Caco-2 (cell line): ENCODE measurements at regions of chr10 and their contacts with region 1.

Region 1: GRCh38 chr10:61964059-61964709 is 62.7 kb downstream of the ARID5B start:
- DNase-seq: peak; percentile 53 to 57
- H3K4me3 ChIP-seq: no peak overlapping the region
- H3K4me3 Mint-ChIP-seq: peak overlapping the region; percentile 51
- H3K27ac Mint-ChIP-seq: peak overlapping the region; percentile 84
- H3K4me1 ChIP-seq: peaks cover 78% of the 10 kb centered on the region
- H3K4me1 Mint-ChIP-seq: peaks cover 75% of the 10 kb centered on the region
- H3K27me3 ChIP-seq: no peaks in the 10 kb centered on the region
- H3K27me3 Mint-ChIP-seq: no peaks in the 10 kb centered on the region
- CTCF ChIP-seq: no peak

Region 2: GRCh38 chr10:61918140-61918539 is 46.0 kb before region 1 on chr10:
- CTCF ChIA-PET with region 1: no interaction called
- POLR2A ChIA-PET with region 1: no interaction called
- intact Hi-C with region 1: no loop called
- DNase-seq: no peak
- H3K4me3 ChIP-seq: no peak overlapping the region
- H3K4me3 Mint-ChIP-seq: peak overlapping the region; percentile 7
- H3K27ac Mint-ChIP-seq: peak overlapping the region; percentile 57
- H3K4me1 ChIP-seq: peaks cover 64% of the 10 kb centered on the region
- H3K4me1 Mint-ChIP-seq: peaks cover 70% of the 10 kb centered on the region
- H3K27me3 ChIP-seq: no peaks in the 10 kb centered on the region
- H3K27me3 Mint-ChIP-seq: no peaks in the 10 kb centered on the region
- CTCF ChIP-seq: no peak

Region 3: GRCh38 chr10:62025901-62026879 is 62.0 kb after region 1 on chr10:
- CTCF ChIA-PET with region 1: no interaction called
- POLR2A ChIA-PET with region 1: no interaction called
- intact Hi-C with region 1: loop called (anchors 1 kb)
- DNase-seq: no peak
- H3K4me3 ChIP-seq: no peak overlapping the region
- H3K4me3 Mint-ChIP-seq: no peak overlapping the region
- H3K27ac Mint-ChIP-seq: peak overlapping the region; percentile 82
- H3K4me1 ChIP-seq: peaks cover 91% of the 10 kb centered on the region
- H3K4me1 Mint-ChIP-seq: peaks cover 90% of the 10 kb centered on the region
- H3K27me3 ChIP-seq: no peaks in the 10 kb centered on the region
- H3K27me3 Mint-ChIP-seq: no peaks in the 10 kb centered on the region
- CTCF ChIP-seq: no peak

Region 4: GRCh38 chr10:62335326-62335725 is 371.1 kb after region 1 on chr10:
- CTCF ChIA-PET with region 1: no interaction called
- POLR2A ChIA-PET with region 1: no interaction called
- intact Hi-C with region 1: no loop called
- DNase-seq: no peak
- H3K4me3 ChIP-seq: no peak overlapping the region
- H3K4me3 Mint-ChIP-seq: no peak overlapping the region
- H3K27ac Mint-ChIP-seq: no peak overlapping the region
- H3K4me1 ChIP-seq: no peaks in the 10 kb centered on the region
- H3K4me1 Mint-ChIP-seq: no peaks in the 10 kb centered on the region
- H3K27me3 ChIP-seq: no peaks in the 10 kb centered on the region
- H3K27me3 Mint-ChIP-seq: peaks cover 19% of the 10 kb centered on the region
- CTCF ChIP-seq: no peak